ENCODE measurements at regions of chr2 and their contacts with region 1.

Region 1: GRCh38 chr2:16900405-16901025 is 234.9 kb upstream of the CYRIA start:
- DNase-seq: no peak
- H3K4me3 Mint-ChIP-seq: no peak overlapping the region
- H3K27ac Mint-ChIP-seq: no peak overlapping the region
- H3K4me1 Mint-ChIP-seq: no peaks in the 10 kb centered on the region
- H3K27me3 Mint-ChIP-seq: no peaks in the 10 kb centered on the region

Region 2: DNA sequence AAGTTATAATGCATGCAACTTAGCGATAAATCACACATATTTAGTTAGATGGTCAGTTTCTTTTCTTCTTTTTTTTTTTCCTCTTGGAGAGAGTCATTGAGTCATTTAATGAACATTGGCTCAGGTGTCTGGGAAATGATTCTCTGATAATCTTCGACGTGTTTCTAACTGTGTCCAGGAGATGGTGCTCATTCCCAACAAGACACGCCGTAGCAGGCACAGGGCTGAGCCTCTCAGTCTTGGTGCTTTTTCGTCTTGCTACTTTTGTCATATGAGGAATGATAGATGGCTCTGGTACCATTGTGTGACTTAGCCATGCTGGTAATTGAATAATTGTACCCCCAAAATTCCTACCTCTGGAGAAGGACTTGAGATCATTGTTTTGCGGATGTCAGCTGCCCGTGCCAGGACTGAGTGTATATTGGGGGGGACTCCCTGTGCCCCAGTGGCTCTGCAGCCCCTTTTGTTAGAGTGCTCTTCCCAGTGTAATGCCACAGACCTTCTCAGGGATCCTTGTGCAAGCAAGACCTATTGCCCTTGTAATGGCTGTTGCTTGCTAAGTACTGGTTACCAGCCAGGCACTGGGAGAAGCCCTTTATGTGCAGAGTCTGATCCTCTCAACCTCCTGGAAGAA is 127.3 kb before region 1 on chr2:
- intact Hi-C with region 1: loop called (anchors 2 kb)
- DNase-seq: no peak
- H3K4me3 Mint-ChIP-seq: no peak overlapping the region
- H3K27ac Mint-ChIP-seq: no peak overlapping the region
- H3K4me1 Mint-ChIP-seq: no peaks in the 10 kb centered on the region
- H3K27me3 Mint-ChIP-seq: peaks cover 2% of the 10 kb centered on the region

Region 3: DNA sequence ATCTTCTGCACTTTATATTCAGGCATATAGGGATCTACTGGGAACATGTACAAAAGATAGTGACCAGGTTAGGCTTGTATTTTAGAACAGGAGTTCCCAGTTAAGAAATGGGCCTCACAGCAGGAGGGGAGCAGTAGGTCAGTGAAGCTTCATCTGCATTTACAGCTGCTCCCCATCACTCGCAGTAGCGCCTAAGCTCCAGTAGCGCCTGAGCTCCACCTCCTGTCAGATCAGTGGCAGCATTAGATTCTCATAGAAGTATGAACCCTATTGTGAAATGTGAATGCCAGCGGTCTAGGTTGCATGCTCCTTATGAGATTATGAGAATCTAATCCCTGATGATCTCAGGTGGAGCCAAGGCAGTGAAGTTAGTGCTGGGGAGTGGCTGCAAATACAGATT is 10.4 kb before region 1 on chr2:
- intact Hi-C with region 1: no loop called
- DNase-seq: no peak
- H3K4me3 Mint-ChIP-seq: no peak overlapping the region
- H3K27ac Mint-ChIP-seq: no peak overlapping the region
- H3K4me1 Mint-ChIP-seq: no peaks in the 10 kb centered on the region
- H3K27me3 Mint-ChIP-seq: peaks cover 3% of the 10 kb centered on the region

Region 4: DNA sequence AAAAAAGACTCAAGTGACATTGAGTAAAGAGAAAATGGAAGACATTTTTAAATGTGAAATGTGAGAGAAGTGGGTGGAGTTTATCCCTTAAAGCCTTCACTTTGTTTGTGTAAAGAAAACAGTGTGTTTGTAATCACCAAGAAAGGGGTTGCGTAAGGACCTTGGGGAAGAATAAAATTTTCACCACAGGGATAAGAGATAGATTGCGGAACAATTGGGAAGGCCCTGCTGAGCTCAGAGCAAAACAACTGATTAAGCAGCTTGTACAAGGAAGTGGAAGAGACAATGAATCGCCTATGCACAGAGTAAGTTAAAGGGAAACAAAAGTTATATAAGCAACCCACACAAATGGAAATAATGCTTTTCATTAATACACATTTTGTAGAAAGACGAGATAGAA is 290.0 kb after region 1 on chr2:
- intact Hi-C with region 1: no loop called
- DNase-seq: no peak
- H3K4me3 Mint-ChIP-seq: no peak overlapping the region
- H3K27ac Mint-ChIP-seq: no peak overlapping the region
- H3K4me1 Mint-ChIP-seq: no peaks in the 10 kb centered on the region
- H3K27me3 Mint-ChIP-seq: no peaks in the 10 kb centered on the region